ENCODE measurements at regions of chr1 and their contacts with region 1.

Region 1: DNA sequence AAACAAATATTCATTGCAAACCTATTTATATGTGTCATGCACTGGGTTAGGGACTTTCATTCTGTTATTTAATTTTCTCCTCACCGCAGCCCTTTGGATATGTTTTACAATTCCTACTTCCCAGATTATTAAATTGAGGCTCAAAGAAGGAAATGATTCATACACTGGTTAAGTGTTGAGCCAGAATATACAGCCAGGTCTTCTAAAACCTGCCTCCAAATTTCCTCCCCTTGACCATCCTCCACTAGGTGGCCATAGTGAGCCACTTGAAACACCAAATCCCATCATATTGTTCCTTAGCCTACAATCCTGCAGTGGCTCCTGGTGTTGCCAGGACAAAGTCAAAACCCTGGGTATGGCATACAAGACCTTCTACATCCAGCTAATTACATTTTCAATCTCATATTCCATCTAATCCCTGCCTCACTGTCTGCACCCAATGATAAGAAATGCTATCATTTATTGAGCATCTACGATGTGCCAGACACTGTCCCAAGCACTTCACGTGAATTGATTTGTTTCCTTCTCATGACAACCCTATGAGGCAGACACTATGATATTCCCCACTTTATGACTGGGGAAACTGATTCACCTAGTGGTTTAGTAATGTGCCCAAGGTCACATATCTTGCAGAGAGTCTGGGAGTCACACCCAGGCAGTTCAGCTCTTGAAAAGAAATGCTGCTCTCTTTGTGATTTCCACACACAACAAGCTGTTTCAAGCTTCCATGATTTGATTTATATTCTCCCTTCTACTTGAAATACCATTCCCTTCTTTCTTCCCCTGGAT is 23.6 kb upstream of the KIRREL1 start:
- DNase-seq: peak; percentile 45 to 49
- H3K4me3 ChIP-seq: no peak overlapping the region
- H3K27ac ChIP-seq: no peak overlapping the region
- H3K4me1 ChIP-seq: no peaks in the 10 kb centered on the region
- H3K27me3 ChIP-seq: peaks cover 22% of the 10 kb centered on the region; the same call in 1 of the 2 replicates
- CTCF ChIP-seq: peak; percentile 77

Region 2: DNA sequence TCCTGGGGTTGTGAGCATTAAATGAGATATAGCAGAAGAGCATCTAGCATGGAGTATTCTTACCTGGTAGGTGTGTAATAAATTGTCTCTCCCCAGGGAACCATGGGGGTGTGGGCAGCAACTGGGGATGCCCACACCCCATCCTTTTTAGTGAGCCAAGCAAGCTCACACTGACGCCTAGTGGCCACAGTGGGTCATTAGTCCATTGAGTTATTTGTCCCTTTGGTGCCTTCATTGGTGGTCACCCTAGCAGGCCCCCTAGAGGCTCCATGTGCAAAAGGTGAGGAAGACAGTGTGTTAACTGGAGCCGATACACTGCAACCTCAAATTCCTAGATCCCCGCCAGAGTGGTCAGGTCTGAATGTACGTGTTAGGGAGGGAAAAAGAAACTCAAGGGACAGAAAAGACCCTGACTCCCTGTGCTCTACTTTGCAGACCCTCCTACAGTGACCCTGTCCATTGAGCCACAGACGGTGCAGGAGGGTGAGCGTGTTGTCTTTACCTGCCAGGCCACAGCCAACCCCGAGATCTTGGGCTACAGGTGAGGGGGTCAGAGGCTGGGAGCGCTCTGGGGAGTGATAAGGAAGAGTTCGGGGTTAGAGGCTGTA is 117.5 kb after region 1 on chr1:
- CTCF ChIA-PET with region 1: no interaction called
- POLR2A ChIA-PET with region 1: no interaction called
- intact Hi-C with region 1: loop called (anchors 1 kb)
- DNase-seq: peak; percentile 51 to 56
- H3K4me3 ChIP-seq: no peak overlapping the region
- H3K27ac ChIP-seq: no peak overlapping the region
- H3K4me1 ChIP-seq: no peaks in the 10 kb centered on the region
- H3K27me3 ChIP-seq: no peaks in the 10 kb centered on the region
- CTCF ChIP-seq: peak; percentile 96

Region 3: DNA sequence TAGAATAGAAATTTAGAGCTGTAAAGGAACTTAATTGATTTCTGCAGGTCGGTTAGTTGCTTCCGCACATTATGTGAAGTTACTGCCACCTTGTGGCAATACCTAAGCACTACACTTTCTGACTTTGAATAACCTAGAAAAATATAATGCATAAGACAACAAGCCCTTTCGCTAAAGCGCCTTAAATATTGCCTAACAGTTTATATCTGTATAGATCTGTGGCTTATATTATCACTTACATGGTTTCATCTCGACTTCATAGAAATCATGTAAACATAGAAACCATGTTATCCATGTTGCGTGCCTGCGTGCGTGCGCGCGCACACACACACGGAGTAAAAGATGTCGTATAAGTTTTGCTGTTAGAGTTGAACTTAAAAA is 1028.9 kb after region 1 on chr1:
- CTCF ChIA-PET with region 1: interaction called, 10 read pairs
- POLR2A ChIA-PET with region 1: no interaction called
- intact Hi-C with region 1: loop called (anchors 10 kb)
- DNase-seq: peak; percentile 23 to 35
- H3K4me3 ChIP-seq: no peak overlapping the region
- H3K27ac ChIP-seq: no peak overlapping the region
- H3K4me1 ChIP-seq: no peaks in the 10 kb centered on the region
- H3K27me3 ChIP-seq: no peaks in the 10 kb centered on the region
- CTCF ChIP-seq: peak; percentile 91